ENCODE measurements at regions of chr5 and their contacts with region 1.

Region 1: GRCh38 chr5:123545506-123545905 is 33.5 kb downstream of the CSNK1G3 start:
- DNase-seq: peak; percentile 57
- H3K4me3 Mint-ChIP-seq: no peak overlapping the region
- H3K27ac Mint-ChIP-seq: no peak overlapping the region
- H3K4me1 Mint-ChIP-seq: peaks cover 45% of the 10 kb centered on the region
- H3K27me3 Mint-ChIP-seq: no peaks in the 10 kb centered on the region

Region 2: DNA sequence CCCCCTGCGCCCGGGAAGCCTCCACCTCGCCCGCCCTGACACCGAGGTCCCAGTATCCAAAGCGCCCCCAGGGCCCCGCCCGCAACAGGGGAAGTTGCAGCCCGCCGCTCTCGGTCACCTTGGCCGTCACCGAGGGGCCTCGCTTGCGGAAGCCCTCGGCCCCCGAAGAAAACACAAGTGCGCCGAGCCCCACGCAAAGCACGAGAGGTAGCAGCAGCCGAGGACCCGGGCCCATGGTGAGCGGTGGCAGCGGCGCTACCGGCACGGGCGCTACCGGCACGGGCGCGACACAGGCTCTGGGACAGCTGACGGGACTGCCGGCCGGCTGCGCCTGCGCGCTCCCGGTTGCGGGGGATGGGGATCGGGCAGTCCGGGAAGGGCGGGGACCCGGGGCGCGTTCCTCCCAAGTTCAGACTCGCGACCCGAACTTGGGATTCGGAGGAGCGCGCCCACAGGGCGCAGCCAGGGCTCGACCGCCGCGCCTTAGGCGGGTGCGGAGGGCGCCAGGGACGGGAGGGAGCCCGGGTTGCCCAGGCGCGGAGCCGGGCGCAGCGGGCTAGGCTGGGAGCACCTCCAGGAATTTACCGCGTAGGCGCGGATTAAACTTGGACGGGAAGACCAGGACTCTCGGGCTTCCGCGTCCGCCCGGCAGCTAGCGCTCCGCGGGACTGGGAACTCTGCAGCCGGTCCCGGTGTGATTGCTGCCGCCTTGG is 509.0 kb before region 1 on chr5 and contains the start of gene PPIC:
- CTCF ChIA-PET with region 1: no interaction called
- intact Hi-C with region 1: loop called (anchors 5 kb)
- DNase-seq: peak; percentile 24
- H3K4me3 Mint-ChIP-seq: peak within 1 kb of the TSS; percentile 56
- H3K27ac Mint-ChIP-seq: no peak within 1 kb of the TSS
- H3K4me1 Mint-ChIP-seq: peaks cover 7% of the 10 kb centered on the region
- H3K27me3 Mint-ChIP-seq: peaks cover 54% of the 10 kb centered on the region
- total RNA-seq, gene PPIC: not detected

Region 3: GRCh38 chr5:123089914-123090670 is 455.4 kb before region 1 on chr5:
- CTCF ChIA-PET with region 1: no interaction called
- intact Hi-C with region 1: loop called (anchors 10 kb)
- DNase-seq: no peak
- H3K4me3 Mint-ChIP-seq: no peak overlapping the region
- H3K27ac Mint-ChIP-seq: no peak overlapping the region
- H3K4me1 Mint-ChIP-seq: peaks cover 30% of the 10 kb centered on the region
- H3K27me3 Mint-ChIP-seq: peaks cover 72% of the 10 kb centered on the region

Region 4: DNA sequence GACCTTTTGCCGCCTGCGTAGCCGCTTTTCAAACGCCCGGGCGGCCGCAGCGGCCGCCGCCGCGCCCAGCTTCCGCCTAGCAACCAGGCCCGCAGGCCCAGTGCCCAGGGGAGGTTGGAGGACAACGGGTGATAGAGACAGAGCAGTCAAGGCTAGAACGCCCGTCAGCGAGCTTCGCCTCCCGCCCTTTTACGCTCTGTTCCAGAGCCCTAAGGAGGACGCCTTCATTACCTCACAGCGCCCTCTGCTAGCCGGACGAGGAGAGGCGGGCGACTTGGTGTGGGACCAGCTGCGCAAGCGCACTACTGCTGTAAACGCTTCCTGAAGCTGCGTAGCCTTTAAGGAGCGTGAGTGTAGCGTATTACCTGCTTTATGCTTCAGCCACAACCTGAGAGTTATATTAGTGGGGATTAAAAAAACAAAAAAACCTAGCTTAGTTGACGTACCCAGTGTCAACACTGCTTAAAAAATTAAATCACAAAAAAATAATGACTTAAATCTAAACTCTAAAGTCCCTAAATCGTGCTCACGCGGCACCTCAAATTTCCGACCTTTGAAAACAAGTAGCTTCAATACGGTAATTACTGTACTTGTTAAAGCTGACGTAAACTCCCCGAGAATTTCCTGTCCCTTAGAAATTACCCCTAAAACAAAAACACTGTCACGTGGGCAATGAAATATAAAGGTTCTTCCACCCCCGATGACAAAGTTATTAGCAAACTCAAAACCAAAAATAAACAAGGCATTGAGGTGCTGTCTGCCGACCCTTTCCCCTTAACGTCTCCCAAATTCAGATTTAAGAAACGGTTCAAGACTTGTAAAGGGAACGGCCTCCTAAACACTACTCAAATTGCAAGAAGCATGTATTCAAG is 122.0 kb before region 1 on chr5 and contains the start of gene CEP120:
- CTCF ChIA-PET with region 1: interaction called, 4 read pairs
- intact Hi-C with region 1: loop called (anchors 1 kb)
- DNase-seq: peak; percentile 98
- H3K4me3 Mint-ChIP-seq: no peak within 1 kb of the TSS
- H3K27ac Mint-ChIP-seq: no peak within 1 kb of the TSS
- H3K4me1 Mint-ChIP-seq: peaks cover 21% of the 10 kb centered on the region
- H3K27me3 Mint-ChIP-seq: no peaks in the 10 kb centered on the region
- total RNA-seq, gene CEP120: 39.2 to 39.5 TPM

Region 5: DNA sequence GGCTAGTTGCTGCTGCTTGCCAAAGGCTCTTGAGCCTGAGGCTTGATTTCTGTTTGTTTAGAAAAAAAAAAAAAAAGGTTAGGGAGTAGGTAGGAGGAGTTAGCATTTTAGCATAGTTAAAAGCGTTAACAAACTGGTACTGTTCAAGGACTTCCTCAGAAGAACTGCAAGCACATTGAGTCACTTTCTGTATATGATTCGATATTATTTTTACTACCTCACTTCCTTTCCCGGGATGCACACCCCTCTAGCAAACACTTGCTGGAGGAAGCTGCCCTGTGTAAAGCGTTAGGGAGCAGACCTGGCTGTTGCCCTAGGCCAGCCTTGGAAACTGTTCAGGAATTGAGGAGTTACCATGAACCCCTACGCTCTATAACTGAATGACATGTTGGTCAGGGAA is 106.6 kb before region 1 on chr5:
- CTCF ChIA-PET with region 1: no interaction called
- intact Hi-C with region 1: loop called (anchors 1 kb)
- DNase-seq: peak; percentile 57
- H3K4me3 Mint-ChIP-seq: no peak overlapping the region
- H3K27ac Mint-ChIP-seq: peak overlapping the region; percentile 68
- H3K4me1 Mint-ChIP-seq: peaks cover 26% of the 10 kb centered on the region
- H3K27me3 Mint-ChIP-seq: no peaks in the 10 kb centered on the region

Region 6: DNA sequence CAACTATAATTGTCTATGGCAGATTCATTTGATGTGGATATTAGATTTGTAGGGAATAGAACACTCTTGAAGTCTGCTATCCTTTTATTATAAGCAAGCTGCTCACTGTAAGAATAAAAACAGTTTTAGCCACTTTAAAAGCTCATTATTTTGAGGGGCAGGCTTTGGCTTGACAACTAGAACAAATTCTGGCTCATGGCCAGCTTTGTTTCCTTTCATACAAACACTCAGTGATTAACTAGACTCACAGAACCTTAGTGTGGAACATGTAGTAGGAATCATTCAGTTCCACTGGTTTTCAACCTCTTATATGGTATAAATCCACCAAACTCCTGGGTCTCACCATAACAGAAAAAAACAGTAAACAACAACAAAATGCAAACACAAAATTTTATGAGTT is 94.9 kb before region 1 on chr5:
- CTCF ChIA-PET with region 1: no interaction called
- intact Hi-C with region 1: loop called (anchors 2 kb)
- DNase-seq: no peak
- H3K4me3 Mint-ChIP-seq: no peak overlapping the region
- H3K27ac Mint-ChIP-seq: no peak overlapping the region
- H3K4me1 Mint-ChIP-seq: peaks cover 34% of the 10 kb centered on the region
- H3K27me3 Mint-ChIP-seq: peaks cover 9% of the 10 kb centered on the region

Region 7: DNA sequence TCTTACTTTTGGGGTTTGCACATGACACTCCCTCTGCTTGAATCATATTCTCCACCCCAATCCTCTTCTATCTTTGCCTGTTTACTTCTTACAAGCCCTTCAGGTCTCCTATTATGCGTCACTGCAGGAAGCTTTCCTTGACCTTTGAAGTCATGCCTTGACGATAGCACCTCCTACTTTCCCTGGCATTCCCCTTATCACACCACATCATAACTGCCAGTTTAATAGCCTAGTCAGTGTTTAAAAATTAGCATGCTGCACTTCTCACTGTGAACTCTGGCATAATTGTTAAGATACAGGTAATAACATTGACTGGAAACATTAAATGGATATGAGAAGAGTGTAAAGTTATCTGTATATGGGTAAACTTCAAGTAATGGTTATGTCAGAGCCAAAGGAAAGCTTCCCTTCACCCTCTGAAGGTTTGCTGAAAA is 85.2 kb before region 1 on chr5:
- CTCF ChIA-PET with region 1: no interaction called
- intact Hi-C with region 1: loop called (anchors 1 kb)
- DNase-seq: peak; percentile 81
- H3K4me3 Mint-ChIP-seq: peak overlapping the region; percentile 10
- H3K27ac Mint-ChIP-seq: peak overlapping the region; percentile 90
- H3K4me1 Mint-ChIP-seq: peaks cover 20% of the 10 kb centered on the region
- H3K27me3 Mint-ChIP-seq: no peaks in the 10 kb centered on the region

Region 8: DNA sequence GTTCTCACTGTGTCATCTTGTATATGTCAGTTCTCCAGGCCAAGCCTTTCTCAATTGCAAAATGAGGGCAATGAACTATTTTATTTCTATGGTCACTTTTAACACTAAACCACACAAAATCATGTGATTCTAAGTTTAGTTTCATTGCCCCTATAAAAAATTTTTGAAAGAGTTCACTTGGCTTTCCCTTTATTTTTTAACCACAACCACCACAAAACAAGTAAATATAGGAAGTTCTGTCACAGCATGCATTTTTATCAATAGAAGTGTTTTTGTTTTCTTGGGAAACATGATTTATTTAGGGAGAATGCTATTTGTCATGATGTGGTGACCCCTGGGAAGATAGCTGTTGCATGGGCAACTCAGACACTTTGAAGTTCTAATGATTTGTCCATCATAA is 135.6 kb after region 1 on chr5:
- CTCF ChIA-PET with region 1: no interaction called
- intact Hi-C with region 1: no loop called
- DNase-seq: no peak
- H3K4me3 Mint-ChIP-seq: no peak overlapping the region
- H3K27ac Mint-ChIP-seq: no peak overlapping the region
- H3K4me1 Mint-ChIP-seq: no peaks in the 10 kb centered on the region
- H3K27me3 Mint-ChIP-seq: peaks cover 4% of the 10 kb centered on the region

Region 9: DNA sequence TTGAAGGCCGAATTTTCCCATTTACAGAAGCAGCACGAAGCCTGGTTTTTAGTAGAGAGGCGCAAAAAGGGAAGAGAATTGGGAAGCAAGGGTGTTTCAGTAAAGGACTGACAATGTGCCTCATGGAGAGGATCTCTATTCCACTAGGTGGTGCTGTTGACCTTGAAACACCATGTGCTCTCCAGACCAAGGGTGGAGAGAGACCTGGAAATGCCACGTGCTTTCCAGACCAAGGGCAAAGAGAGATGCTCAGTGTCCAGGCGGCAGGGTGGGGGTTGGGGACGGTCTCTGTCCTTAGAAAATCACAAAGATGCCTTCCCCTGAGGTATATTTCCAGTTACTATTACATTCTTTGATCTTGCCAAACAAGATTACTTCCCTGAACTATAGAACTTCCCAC is 391.7 kb after region 1 on chr5:
- CTCF ChIA-PET with region 1: no interaction called
- intact Hi-C with region 1: no loop called
- DNase-seq: peak; percentile 6
- H3K4me3 Mint-ChIP-seq: no peak overlapping the region
- H3K27ac Mint-ChIP-seq: no peak overlapping the region
- H3K4me1 Mint-ChIP-seq: no peaks in the 10 kb centered on the region
- H3K27me3 Mint-ChIP-seq: no peaks in the 10 kb centered on the region